Panc1 (cell line): ENCODE measurements at regions of chr14 and their contacts with region 1.

Region 1: DNA sequence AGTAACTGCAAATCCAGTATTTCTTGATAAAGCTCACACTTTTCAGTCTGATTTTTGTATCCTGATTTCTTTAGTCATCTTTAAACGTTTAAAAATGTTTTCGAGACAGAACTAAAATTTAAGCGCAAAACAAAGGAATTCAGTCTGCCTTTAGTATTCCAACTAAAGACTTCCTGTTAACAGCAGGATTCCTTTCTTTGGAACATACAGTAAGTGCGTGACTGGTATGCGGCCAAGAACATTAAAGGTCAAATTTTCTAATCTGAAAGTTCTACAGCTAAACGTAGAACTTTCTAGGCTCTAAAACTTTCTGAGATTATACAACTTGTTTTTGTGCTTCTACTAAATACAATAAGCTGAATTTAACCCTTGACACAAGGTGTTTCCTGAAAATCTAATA is 9.9 kb downstream of the SAV1 start:
- DNase-seq: no peak
- ATAC-seq: no peak
- H3K4me3 ChIP-seq: no peak overlapping the region
- H3K27ac ChIP-seq: no peak overlapping the region
- H3K4me1 ChIP-seq: peaks cover 4% of the 10 kb centered on the region; the same call in 1 of the 2 replicates
- H3K27me3 ChIP-seq: no peaks in the 10 kb centered on the region
- CTCF ChIP-seq: no peak

Region 2: GRCh38 chr14:50510157-50510556 is 148.0 kb before region 1 on chr14:
- CTCF ChIA-PET with region 1: no interaction called
- POLR2A ChIA-PET with region 1: no interaction called
- in situ Hi-C with region 1: no loop called
- intact Hi-C with region 1: no loop called
- DNase-seq: no peak
- ATAC-seq: no peak
- H3K4me3 ChIP-seq: no peak overlapping the region
- H3K27ac ChIP-seq: no peak overlapping the region
- H3K4me1 ChIP-seq: peaks cover 3% of the 10 kb centered on the region; the same call in 1 of the 2 replicates
- H3K27me3 ChIP-seq: no peaks in the 10 kb centered on the region
- CTCF ChIP-seq: no peak

Region 3: GRCh38 chr14:50736932-50737419 is 78.8 kb after region 1 on chr14:
- CTCF ChIA-PET with region 1: no interaction called
- POLR2A ChIA-PET with region 1: interaction called, 16 read pairs
- in situ Hi-C with region 1: no loop called
- intact Hi-C with region 1: no loop called
- DNase-seq: no peak
- ATAC-seq: no peak
- H3K4me3 ChIP-seq: no peak overlapping the region
- H3K27ac ChIP-seq: no peak overlapping the region
- H3K4me1 ChIP-seq: no peaks in the 10 kb centered on the region
- H3K27me3 ChIP-seq: no peaks in the 10 kb centered on the region
- CTCF ChIP-seq: no peak